Activated CD4-positive, alpha-beta T cell treated with anti-CD3 and anti-CD28 coated beads, Interleukin-2, amount 10 ng/mL, durations not matched to agents 24 days and 14 days (primary cell): ENCODE measurements at regions of chr1 and their contacts with region 1.

Region 1: DNA sequence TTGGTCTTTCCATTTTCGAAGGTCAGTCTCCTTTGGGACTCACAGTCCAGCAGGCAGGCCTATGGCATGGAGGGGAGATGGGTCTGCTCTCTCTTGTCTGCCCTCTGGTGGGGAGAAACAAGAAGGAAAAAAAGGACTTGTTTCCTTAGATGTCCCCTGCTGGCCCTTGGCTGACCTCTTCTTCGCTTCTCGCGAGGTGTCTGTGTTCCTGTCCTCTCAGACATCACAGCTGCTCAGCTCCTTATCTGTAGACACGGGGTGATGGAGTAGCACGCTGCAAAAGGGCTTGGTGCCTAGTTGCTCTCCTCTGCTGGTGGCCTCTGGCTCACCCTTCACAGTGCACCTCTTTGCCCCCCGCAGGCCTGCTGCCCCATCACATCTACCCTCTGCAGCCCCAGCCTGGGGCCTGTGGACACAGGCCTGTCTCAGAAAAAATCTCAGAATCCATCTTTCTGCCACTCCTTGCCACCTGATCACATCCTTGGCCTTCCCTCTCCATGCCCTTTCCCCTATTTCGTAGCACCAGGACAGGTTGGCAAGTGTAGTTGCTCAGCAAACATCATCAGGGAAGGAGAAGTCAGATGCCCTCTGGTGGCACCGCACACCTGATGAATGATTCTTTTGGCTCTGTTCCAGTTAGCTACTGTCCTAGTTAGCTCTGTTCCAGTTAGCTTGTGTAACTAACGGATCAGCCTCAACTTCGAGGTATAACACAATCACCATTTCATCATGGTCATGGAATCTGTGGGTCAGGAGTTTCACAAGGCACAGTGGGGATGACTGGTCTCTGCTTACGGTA is 18.7 kb upstream of the AK2 start:
- DNase-seq: peak; percentile 80
- H3K4me3 Mint-ChIP-seq: no peak overlapping the region
- H3K27ac Mint-ChIP-seq: no peak overlapping the region
- H3K4me1 Mint-ChIP-seq: peaks cover 11% of the 10 kb centered on the region
- H3K27me3 Mint-ChIP-seq: peaks cover 4% of the 10 kb centered on the region

Region 2: GRCh38 chr1:32933742-32934322 is 121.6 kb before region 1 on chr1:
- intact Hi-C with region 1: loop called (anchors 1 kb)
- DNase-seq: no peak
- H3K4me3 Mint-ChIP-seq: no peak overlapping the region
- H3K27ac Mint-ChIP-seq: no peak overlapping the region
- H3K4me1 Mint-ChIP-seq: peaks cover 21% of the 10 kb centered on the region
- H3K27me3 Mint-ChIP-seq: no peaks in the 10 kb centered on the region

Region 3: DNA sequence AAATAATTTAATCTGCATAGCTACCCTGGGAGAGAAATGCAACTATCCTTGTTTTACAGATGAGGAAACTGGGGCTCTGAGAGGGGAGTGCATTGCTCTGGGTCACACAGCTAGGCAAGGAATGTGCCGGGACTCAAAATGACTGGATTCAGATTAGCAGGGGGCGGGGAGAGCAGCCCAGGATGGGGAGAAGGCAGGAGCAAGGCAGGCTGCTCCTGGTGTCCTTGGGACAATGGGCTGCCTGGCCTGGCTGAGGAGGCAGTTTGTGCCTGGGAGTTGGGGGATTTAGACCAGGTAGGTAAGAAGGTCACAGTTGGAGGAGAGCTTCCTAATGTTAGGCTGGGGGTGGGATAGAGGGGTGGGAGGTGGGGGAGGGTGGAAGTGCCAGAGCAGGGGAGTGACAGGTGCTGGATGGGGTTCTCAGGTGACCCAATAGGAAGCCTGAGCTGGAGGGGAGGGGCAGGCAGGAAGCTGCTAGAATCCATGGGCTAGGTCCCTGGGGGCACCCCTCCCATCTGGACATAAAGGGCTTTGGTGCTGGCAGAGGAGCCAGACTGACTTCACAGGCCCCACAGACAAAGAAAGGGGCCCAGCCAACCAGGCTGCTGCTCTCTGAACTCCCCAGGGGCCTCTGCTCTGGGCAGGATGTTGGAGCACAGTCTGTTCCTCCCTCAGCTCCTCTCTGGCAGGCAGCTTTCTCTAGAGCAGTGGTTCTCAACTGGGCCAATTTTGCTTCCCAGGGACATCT is 97.5 kb after region 1 on chr1:
- intact Hi-C with region 1: no loop called
- DNase-seq: no peak
- H3K4me3 Mint-ChIP-seq: no peak overlapping the region
- H3K27ac Mint-ChIP-seq: no peak overlapping the region
- H3K4me1 Mint-ChIP-seq: peaks cover 3% of the 10 kb centered on the region
- H3K27me3 Mint-ChIP-seq: no peaks in the 10 kb centered on the region